CD4-positive, alpha-beta T cell (primary cell): ENCODE measurements at regions of chr9 and their contacts with region 1.

Region 1: GRCh38 chr9:134449221-134449894 is 123.1 kb downstream of the RXRA start:
- DNase-seq: peak; percentile 71 to 94 (median 79)
- ATAC-seq: peak; percentile 100
- H3K4me3 ChIP-seq: no peak overlapping the region
- H3K4me3 Mint-ChIP-seq: no peak overlapping the region
- H3K27ac ChIP-seq: no peak overlapping the region
- H3K27ac Mint-ChIP-seq: peak overlapping the region; percentile 38
- H3K4me1 ChIP-seq: peaks cover 8% of the 10 kb centered on the region
- H3K4me1 Mint-ChIP-seq: peaks cover 11% of the 10 kb centered on the region
- H3K27me3 ChIP-seq: no peaks in the 10 kb centered on the region
- H3K27me3 Mint-ChIP-seq: no peaks in the 10 kb centered on the region
- CTCF ChIP-seq: peak; percentile 81

Region 2: DNA sequence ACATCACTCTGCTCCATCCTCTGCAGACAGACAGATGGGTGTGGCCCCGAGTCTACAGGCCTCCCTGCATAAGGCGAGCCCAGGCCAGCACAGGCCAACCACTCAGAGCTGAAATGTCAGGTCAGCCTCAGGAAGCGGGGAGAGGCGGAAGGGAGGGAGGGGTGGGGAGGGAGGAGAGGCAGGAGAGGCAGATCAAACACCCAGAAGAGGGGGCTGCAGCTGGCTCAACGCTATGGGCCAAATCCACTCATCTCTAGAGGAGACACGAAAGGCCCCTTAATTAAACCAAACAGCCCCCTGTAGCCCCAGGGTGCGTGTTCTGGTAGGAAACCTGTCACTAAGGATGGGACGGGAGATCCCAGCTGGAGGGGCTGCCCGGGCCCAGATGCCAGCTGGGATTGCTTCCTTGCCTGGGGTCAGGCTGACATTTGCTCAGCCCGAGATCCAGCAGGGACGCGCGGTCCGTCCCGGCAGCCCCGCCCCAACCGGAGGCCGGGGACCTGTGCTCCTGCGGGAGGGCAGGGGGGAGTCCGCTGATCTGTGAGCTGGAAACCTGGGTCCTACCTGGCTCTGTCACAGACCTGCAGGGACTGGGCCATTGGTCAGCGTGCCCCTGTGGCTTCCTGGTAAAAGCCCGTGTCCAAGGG is 614.0 kb before region 1 on chr9:
- CTCF ChIA-PET with region 1: no interaction called
- POLR2A ChIA-PET with region 1: no interaction called
- intact Hi-C with region 1: no loop called
- DNase-seq: no peak
- ATAC-seq: no peak
- H3K4me3 ChIP-seq: no peak overlapping the region
- H3K4me3 Mint-ChIP-seq: no peak overlapping the region
- H3K27ac ChIP-seq: no peak overlapping the region
- H3K27ac Mint-ChIP-seq: no peak overlapping the region
- H3K4me1 ChIP-seq: no peaks in the 10 kb centered on the region
- H3K4me1 Mint-ChIP-seq: no peaks in the 10 kb centered on the region
- H3K27me3 ChIP-seq: no peaks in the 10 kb centered on the region
- H3K27me3 Mint-ChIP-seq: no peaks in the 10 kb centered on the region
- CTCF ChIP-seq: no peak

Region 3: DNA sequence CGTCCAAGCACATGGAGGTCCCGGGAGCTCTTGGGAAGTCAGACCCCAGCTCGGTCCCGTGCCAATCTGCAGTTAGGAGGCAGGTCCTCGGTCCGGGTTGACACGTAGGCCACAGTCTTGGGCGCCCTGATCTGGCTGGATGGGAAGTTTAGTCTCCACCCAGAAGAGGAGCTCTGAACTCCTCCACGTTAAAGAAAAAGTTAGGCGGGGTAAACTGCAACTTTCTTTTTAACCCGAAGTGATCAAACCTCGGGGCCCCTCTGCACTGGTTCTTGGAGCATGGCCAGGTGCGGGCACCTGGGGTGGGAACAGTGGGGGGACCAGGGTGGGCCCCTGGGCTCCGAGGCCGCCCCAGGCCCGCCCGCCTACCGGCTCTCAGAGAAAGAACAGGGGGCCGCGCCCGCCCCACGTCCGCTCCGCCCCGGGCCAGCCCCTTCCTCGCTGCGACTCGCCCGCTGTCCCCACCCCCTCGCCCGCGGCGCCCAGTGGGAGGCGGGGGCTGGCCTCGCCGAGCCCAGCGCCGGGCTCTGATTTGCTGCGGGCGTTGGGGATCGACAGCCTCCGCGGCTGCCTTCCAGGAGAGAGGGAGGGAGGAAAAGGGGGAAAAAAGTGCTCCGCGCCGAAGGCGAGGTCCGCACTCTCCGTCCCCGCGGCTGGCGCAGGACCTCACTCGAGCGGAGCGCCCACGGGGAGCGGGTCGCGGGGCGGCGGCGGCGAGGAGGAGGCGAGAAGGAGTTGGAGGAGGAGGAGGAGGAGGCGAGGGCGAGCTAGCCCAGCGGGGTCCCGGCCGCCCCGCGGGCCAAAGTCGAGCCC is 192.0 kb after region 1 on chr9 and contains the start of gene COL5A1:
- CTCF ChIA-PET with region 1: no interaction called
- POLR2A ChIA-PET with region 1: no interaction called
- intact Hi-C with region 1: loop called in 1 of 2 experiments (anchors 5 kb)
- DNase-seq: peak in 13 of 14 experiments; percentile 4 to 69 (median 41)
- ATAC-seq: peak; percentile 94
- H3K4me3 ChIP-seq: peak within 1 kb of the TSS; percentile 26
- H3K4me3 Mint-ChIP-seq: peak within 1 kb of the TSS; percentile 62
- H3K27ac ChIP-seq: no peak within 1 kb of the TSS
- H3K27ac Mint-ChIP-seq: no peak within 1 kb of the TSS
- H3K4me1 ChIP-seq: peaks cover 8% of the 10 kb centered on the region
- H3K4me1 Mint-ChIP-seq: no peaks in the 10 kb centered on the region
- H3K27me3 ChIP-seq: peaks cover 9 to 11% of the 10 kb centered on the region in 2 experiments
- H3K27me3 Mint-ChIP-seq: peaks cover 17% of the 10 kb centered on the region
- CTCF ChIP-seq: no peak
- total RNA-seq, gene COL5A1: 0.41 to 0.50 TPM

Region 4: DNA sequence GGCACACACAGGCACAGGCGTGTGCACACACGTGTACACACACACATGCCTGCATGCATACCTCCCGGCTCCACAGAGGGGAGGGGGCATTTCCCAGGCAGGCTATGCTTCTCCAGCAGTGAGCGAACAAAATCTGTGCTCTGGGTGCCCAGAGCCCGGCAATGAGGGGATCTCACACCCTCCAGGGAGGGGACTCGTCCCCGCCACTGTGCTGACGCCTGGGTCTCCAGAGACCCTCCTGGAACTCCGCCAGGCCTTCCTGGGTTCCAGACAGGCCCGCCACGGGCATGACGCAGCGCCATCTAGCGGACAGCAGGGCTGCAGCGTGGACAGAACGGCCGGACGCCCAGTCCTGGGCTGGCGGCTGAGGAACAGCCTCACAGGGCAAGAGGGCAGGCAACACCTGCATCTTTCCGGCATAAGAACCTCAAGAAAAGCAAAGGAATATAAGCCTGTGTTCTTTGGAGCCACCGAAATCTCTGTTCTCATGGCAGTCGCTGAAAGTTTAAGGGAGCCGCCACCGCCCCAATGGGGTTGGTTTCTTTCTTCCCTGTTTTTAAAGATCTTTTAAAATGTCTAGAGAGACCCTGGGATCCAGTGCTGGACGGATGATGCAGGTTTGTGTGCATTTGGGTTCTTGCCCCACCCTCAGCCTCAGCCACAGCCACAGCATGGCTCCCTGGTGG is 894.6 kb after region 1 on chr9:
- CTCF ChIA-PET with region 1: no interaction called
- POLR2A ChIA-PET with region 1: no interaction called
- intact Hi-C with region 1: loop called (anchors 1 to 5 kb)
- DNase-seq: peak; percentile 13 to 59 (median 28)
- ATAC-seq: no peak
- H3K4me3 ChIP-seq: no peak overlapping the region
- H3K4me3 Mint-ChIP-seq: no peak overlapping the region
- H3K27ac ChIP-seq: no peak overlapping the region
- H3K27ac Mint-ChIP-seq: no peak overlapping the region
- H3K4me1 ChIP-seq: no peaks in the 10 kb centered on the region
- H3K4me1 Mint-ChIP-seq: no peaks in the 10 kb centered on the region
- H3K27me3 ChIP-seq: peaks cover 0 to 6% of the 10 kb centered on the region in 2 experiments
- H3K27me3 Mint-ChIP-seq: peaks cover 10% of the 10 kb centered on the region
- CTCF ChIP-seq: peak; percentile 73

Region 5: GRCh38 chr9:135410831-135411473 is 961.6 kb after region 1 on chr9:
- CTCF ChIA-PET with region 1: no interaction called
- POLR2A ChIA-PET with region 1: no interaction called
- intact Hi-C with region 1: loop called (anchors 1 to 2 kb)
- DNase-seq: peak in 1 of 14 experiments; percentile 6
- ATAC-seq: no peak
- H3K4me3 ChIP-seq: no peak overlapping the region
- H3K4me3 Mint-ChIP-seq: no peak overlapping the region
- H3K27ac ChIP-seq: no peak overlapping the region
- H3K27ac Mint-ChIP-seq: no peak overlapping the region
- H3K4me1 ChIP-seq: peaks cover 6% of the 10 kb centered on the region
- H3K4me1 Mint-ChIP-seq: no peaks in the 10 kb centered on the region
- H3K27me3 ChIP-seq: peaks cover 0 to 5% of the 10 kb centered on the region in 2 experiments
- H3K27me3 Mint-ChIP-seq: peaks cover 17% of the 10 kb centered on the region
- CTCF ChIP-seq: no peak